Spleen (tissue), 13 donors: ENCODE measurements at regions of chr19 and their contacts with region 1.

Region 1: DNA sequence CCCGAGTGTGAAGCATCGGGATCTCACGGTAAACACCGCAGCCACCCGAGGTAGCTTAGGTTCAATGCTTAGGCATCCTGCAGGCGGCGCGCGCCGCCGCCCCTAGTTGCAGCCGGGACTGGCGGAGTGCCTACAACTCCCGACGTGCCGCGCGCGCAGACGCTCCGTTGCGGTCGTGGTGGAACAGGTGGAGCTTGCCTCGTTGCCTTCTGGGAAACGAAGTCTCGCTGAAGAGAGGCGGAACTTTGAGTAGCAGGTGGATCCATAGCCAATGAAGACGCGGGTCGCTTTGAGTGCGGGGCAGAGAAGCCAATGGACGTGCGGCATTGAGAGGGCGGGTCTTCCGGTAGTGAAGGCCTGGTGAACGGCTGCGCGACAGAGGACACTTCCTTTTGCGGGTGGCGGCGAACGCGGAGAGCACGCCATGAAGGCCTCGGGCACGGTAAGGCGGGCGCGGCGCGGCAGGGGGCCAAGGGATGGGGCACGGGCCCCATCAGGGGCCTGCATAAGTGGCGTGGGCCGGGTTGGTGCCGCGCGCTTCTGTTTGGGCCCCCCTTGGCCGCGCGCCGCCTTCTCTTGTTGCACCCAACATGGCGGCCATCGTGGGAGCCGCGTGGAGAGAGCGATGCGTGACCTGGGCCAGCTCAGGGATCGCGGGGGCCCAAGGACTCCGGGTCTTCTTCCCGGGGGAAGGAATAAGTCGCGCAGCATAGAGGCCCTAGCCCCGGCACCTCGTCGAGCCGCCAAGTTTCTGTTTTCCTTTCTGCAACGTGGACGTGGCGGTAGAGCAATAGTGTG is at the start of gene RPL18A:
- DNase-seq: peak; percentile 100
- H3K4me3 ChIP-seq: peak within 1 kb of the TSS; percentile 92 to 100 (median 100)
- H3K27ac ChIP-seq: peak within 1 kb of the TSS; percentile 84 to 93 (median 91)
- H3K4me1 ChIP-seq: peaks cover 17 to 64% (median 47%) of the 10 kb centered on the region in 6 donors
- H3K27me3 ChIP-seq: no peaks in the 10 kb centered on the region
- CTCF ChIP-seq: peak; percentile 55 to 93 (median 90)
- POLR2A ChIP-seq: peak; percentile 82 to 92 (median 88)
- total RNA-seq, gene RPL18A: 1,310 to 2,382 (median 1,642) TPM

Region 2: GRCh38 chr19:17784201-17785008 is 75.3 kb before region 1 on chr19:
- intact Hi-C with region 1: loop called (anchors 5 kb)
- DNase-seq: peak; percentile 86
- H3K4me3 ChIP-seq: no peak overlapping the region
- H3K27ac ChIP-seq: no peak overlapping the region
- H3K4me1 ChIP-seq: peaks cover 0 to 15% (median 5%) of the 10 kb centered on the region in 6 donors
- H3K27me3 ChIP-seq: peaks cover 0 to 12% (median 0%) of the 10 kb centered on the region in 7 donors
- CTCF ChIP-seq: peak; percentile 38 to 89 (median 83)
- POLR2A ChIP-seq: peak in 1 of 3 donors; percentile 26

Region 3: GRCh38 chr19:17824339-17824738 is 35.4 kb before region 1 on chr19:
- intact Hi-C with region 1: no loop called
- DNase-seq: no peak
- H3K4me3 ChIP-seq: no peak overlapping the region
- H3K27ac ChIP-seq: peak overlapping the region in 2 of 8 donors; percentile 7 to 15
- H3K4me1 ChIP-seq: peaks cover 0 to 43% (median 7%) of the 10 kb centered on the region in 6 donors
- H3K27me3 ChIP-seq: no peaks in the 10 kb centered on the region
- CTCF ChIP-seq: no peak
- POLR2A ChIP-seq: no peak

Region 4: DNA sequence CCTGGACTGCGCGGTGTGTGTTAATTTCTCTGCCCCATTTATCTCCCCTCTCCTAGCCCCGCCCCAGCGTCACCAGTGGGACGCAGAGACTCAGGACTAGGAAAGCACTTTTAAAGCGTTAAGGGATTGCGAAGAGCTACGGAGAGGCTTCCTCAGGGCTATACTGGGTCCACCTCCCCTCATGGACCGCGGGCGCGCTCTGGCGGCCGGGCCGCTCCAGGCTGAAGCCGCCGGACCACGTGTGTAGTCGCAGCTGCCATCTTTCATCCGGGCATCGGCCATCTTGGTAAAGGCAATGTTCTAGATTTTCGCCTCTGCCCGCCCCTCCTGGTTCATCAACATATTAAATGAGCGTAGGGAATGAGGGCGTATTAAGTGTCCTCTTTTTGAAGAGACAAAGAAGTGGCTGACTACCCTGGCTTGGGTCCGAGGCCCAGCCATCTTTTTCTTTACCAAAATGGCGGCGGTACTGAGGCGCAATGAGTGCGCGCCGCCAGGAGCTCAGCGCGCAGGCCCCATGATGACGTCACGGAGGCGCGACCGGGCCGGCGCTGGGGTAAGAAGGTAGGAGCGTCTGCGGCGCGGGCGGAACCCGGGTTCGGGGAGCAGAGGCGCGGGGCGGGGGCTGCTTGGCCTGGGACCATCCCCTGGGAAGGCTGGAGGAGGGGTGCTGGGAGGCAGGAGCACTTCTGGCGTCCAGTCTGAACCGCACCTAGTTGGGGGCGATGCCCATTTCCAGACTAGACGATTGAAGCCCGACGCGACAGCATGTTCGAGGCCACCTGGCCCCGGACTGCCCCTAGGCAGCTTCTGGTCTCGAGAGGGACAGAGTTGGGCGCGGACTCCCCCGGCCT is 73.0 kb after region 1 on chr19 and contains the start of gene CCDC124:
- intact Hi-C with region 1: loop called (anchors 2 kb)
- DNase-seq: peak; percentile 98
- H3K4me3 ChIP-seq: peak within 1 kb of the TSS; percentile 72 to 89 (median 78)
- H3K27ac ChIP-seq: peak within 1 kb of the TSS; percentile 75 to 94 (median 92)
- H3K4me1 ChIP-seq: peaks cover 9 to 32% (median 26%) of the 10 kb centered on the region in 6 donors
- H3K27me3 ChIP-seq: peaks cover 0 to 3% (median 0%) of the 10 kb centered on the region in 7 donors
- CTCF ChIP-seq: peak; percentile 82 to 97 (median 95)
- POLR2A ChIP-seq: peak; percentile 37 to 80 (median 64)
- total RNA-seq, gene CCDC124: 29.5 to 48.6 (median 41.2) TPM

Region 5: GRCh38 chr19:17996826-17997316 is 137.1 kb after region 1 on chr19:
- intact Hi-C with region 1: loop called (anchors 10 kb)
- DNase-seq: peak; percentile 95
- H3K4me3 ChIP-seq: no peak overlapping the region
- H3K27ac ChIP-seq: no peak overlapping the region
- H3K4me1 ChIP-seq: peaks cover 2 to 38% (median 25%) of the 10 kb centered on the region in 6 donors
- H3K27me3 ChIP-seq: peaks cover 0 to 18% (median 0%) of the 10 kb centered on the region in 7 donors
- CTCF ChIP-seq: peak; percentile 98 to 99 (median 99)
- POLR2A ChIP-seq: no peak

Region 6: DNA sequence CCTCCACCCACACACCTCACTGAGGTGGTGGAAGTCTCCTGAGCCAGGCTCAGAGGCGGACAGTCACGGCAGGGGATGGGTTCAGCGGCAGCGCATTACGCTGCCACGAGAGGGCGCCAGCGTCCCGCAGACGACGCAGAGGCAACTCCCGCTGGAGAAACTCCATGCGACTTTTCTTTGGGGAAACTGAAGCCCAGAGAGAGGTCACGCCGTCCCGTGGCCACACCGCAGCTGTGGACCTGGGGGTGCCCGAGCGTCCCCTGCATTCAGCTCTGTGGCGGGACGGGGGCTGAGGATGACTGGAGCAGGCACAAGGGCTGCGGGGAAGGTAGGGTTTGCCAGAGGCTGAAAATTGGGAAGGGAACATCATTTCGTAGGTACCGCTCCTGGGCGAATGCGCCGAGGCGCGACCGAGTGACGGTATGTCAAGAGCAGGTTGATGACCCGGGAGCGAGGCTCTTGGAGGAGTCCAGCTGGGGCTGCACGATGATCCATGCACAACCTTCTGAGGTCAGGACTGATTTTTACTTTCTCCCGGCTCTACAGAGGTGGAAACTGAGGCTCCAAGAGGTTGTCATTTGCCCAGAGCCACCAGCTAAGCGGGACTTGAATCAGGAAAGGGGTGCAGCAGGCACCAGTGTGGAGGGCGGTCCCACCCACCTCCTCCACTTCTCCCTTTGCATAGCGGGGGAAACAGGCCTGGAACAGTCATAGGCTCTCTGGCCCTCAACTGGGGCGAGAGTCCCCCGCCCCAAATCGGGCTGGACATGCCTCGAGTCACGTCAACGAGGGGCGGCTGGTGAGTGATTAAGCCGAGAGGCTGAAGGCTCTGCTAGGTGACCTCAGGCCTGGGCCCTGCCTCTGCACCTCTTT is 147.5 kb after region 1 on chr19:
- intact Hi-C with region 1: no loop called
- DNase-seq: peak; percentile 95
- H3K4me3 ChIP-seq: peak overlapping the region; percentile 35 to 71 (median 59)
- H3K27ac ChIP-seq: peak overlapping the region; percentile 63 to 91 (median 86)
- H3K4me1 ChIP-seq: peaks cover 21 to 80% (median 50%) of the 10 kb centered on the region in 6 donors
- H3K27me3 ChIP-seq: no peaks in the 10 kb centered on the region
- CTCF ChIP-seq: peak; percentile 94 to 100 (median 99)
- POLR2A ChIP-seq: no peak